ENCODE measurements at regions of chr5 and their contacts with region 1.

Region 1: GRCh38 chr5:159262859-159263567 is at the start of gene UBLCP1:
- DNase-seq: peak; percentile 86
- H3K4me3 ChIP-seq: peak within 1 kb of the TSS; percentile 80 to 92 (median 87)
- H3K27ac ChIP-seq: peak within 1 kb of the TSS; percentile 97
- H3K4me1 ChIP-seq: peaks cover 13% of the 10 kb centered on the region
- H3K27me3 ChIP-seq: no peaks in the 10 kb centered on the region
- CTCF ChIP-seq: no peak
- total RNA-seq, gene UBLCP1: 30.2 to 36.5 TPM

Region 2: DNA sequence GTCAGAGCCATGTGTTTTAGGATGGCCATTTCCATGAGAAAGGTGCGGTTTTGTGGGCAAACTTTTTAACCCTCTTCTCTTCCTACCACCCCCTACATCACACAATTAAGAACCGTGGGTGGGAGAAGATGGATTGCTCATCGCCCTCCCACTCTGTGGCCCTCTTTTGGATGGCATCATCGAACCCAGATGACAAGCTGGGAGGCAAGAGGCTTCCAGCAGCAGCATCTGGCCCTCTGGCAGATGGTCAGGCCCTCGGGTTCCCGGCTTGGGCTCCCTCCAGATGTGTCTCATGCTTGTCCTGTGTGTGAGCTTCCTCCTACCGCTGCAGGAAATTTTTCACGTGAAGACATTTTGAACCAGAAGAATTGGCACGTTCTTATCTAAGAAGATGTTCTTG is 363.2 kb before region 1 on chr5:
- CTCF ChIA-PET with region 1: no interaction called
- dilution Hi-C with region 1: no loop called
- in situ Hi-C with region 1: no loop called
- intact Hi-C with region 1: no loop called
- DNase-seq: no peak
- H3K4me3 ChIP-seq: no peak overlapping the region
- H3K27ac ChIP-seq: no peak overlapping the region
- H3K4me1 ChIP-seq: no peaks in the 10 kb centered on the region
- H3K27me3 ChIP-seq: no peaks in the 10 kb centered on the region
- CTCF ChIP-seq: no peak

Region 3: DNA sequence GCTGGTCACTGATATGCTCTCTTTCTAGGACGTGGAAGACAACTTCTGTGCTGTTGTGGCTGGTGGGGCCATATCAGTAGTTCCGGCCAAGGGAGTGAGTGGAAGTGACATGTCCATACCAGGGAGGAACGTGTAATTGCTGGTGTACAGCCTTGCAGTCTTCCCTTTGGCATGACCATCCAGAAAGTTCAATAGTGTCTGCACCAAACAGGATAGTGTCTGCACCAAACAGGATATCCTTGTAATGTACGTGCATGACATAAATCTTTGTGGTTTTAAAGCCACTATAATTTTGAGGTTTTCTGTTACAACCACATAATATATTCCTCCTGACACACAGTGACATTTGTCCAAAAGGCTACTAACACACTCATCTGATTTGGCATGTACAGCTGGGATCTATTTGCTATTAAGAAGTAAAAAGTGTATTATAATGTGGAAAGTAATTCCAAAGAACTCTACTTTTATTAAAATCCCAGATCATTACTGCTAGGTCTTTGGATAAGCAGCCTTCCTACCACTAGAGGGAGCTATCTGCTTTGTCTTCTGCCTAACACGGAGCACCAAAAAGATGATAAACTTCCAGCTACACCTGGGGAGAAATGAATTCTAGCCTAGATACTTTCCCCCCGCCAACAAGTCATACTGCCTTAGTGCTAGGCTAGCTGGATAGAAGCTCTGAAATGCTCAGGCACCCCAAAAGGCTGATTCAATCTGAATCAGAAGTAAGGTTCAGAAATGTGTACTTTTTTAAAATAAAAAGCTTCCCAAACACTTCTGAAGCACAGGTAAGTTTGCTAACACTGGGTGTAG is 106.4 kb before region 1 on chr5:
- CTCF ChIA-PET with region 1: interaction called, 4 read pairs
- dilution Hi-C with region 1: loop called (anchors 5 kb)
- in situ Hi-C with region 1: loop called in 1 of 2 experiments (anchors 25 kb)
- intact Hi-C with region 1: loop called (anchors 1 kb)
- DNase-seq: peak; percentile 65
- H3K4me3 ChIP-seq: no peak overlapping the region
- H3K27ac ChIP-seq: no peak overlapping the region
- H3K4me1 ChIP-seq: peaks cover under 1% of the 10 kb centered on the region
- H3K27me3 ChIP-seq: no peaks in the 10 kb centered on the region
- CTCF ChIP-seq: peak; percentile 84 to 87

Region 4: DNA sequence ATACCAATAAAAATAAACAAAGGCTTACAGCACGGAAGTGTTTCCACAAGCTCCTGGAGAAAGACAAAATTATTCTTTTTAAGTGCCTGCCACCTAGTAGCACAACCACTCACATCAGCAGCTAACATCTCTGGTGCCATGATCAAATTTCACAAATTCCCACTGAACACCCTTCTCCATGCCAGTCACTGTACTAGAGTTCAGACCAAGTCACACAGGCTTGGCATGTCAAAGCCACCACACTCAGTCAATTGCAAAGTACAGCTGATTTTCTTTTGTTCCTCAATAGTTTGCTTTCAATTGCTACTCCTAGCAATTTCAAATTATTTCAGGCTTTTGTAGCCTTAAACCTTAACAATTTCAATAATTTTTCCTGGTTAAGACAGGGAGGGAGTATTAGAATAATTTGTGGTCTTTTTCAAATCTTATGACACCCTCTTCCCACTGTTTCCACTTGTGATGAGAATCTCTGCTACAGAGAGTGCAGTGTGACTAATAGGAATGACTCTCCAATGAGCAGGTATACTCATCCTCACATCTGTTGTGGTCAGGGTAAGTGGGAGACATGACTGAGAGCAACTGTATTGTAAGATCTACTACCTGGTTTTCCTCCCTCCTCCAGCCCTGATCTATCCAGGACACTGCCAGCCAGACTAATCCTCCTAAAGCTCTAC is 99.8 kb before region 1 on chr5:
- CTCF ChIA-PET with region 1: no interaction called
- dilution Hi-C with region 1: loop called (anchors 5 kb)
- in situ Hi-C with region 1: loop called in 1 of 2 experiments (anchors 25 kb)
- intact Hi-C with region 1: no loop called
- DNase-seq: peak; percentile 97
- H3K4me3 ChIP-seq: no peak overlapping the region
- H3K27ac ChIP-seq: peak overlapping the region; percentile 85
- H3K4me1 ChIP-seq: peaks cover 19% of the 10 kb centered on the region
- H3K27me3 ChIP-seq: no peaks in the 10 kb centered on the region
- CTCF ChIP-seq: no peak

Region 5: DNA sequence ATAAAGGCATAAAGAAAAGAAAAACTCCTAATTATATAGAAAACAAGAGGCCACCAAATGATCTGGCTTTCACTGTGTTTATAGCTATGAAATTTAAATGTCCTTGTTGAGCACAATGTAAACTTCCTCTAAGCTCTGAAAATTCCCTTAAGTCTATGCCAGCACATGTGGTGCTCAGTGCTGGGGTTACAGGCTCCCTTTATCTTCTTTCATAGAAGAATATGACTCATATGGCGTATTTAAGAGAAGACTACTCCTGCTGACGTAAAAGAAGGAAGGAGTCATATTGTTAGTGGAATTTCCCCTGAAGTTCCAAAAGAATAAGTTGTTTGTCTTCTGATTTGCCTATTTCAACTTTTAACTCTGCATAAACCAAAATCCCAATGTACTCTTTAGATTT is 84.0 kb before region 1 on chr5:
- CTCF ChIA-PET with region 1: no interaction called
- dilution Hi-C with region 1: no loop called
- in situ Hi-C with region 1: loop called (anchors 10 to 25 kb)
- intact Hi-C with region 1: no loop called
- DNase-seq: peak; percentile 96
- H3K4me3 ChIP-seq: no peak overlapping the region
- H3K27ac ChIP-seq: peak overlapping the region; percentile 99
- H3K4me1 ChIP-seq: peaks cover 39% of the 10 kb centered on the region
- H3K27me3 ChIP-seq: no peaks in the 10 kb centered on the region
- CTCF ChIP-seq: no peak

Region 6: DNA sequence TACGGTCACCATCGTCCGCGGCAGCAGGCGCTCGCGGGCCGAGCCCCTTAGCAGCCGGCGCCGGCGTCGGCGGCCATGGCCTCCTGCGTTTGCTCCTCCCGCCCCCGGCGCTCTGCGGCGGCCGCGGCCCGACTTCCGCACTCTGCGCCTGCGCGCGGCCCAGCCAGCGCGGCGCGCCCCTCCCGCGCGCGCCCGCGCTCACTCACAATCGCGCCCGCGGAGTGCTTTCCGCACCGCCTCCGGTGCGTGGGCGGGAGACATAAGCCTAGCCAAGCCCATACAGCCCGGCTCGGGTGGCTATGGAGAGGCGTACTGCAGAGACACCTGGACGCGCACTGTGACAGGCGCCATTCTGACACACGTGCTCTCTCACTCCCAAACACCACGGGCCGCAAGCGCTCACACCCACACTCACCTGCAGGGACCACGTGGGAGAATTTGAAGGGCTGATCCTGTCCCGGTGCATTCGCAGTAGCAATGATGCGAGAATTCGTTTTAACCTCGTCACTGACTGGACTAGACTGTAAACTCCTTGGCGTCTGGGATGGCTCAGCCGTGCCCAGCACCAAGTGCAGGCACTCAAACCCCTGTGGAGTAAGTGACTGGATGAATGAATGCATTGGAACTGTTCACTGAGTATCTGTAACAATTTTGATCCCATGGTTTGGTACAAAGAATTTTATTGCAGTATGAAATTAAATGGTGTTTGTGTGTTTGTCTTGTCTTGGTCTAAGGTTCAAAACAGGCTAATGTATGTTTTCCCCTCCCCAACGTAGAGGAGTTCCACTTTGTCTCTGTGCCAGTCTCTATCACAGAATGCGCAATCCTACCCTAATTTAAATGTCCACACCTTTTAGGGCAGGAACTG is 53.3 kb before region 1 on chr5 and contains the start of gene RNF145:
- CTCF ChIA-PET with region 1: no interaction called
- dilution Hi-C with region 1: no loop called
- in situ Hi-C with region 1: loop called in 1 of 2 experiments (anchors 5 kb)
- intact Hi-C with region 1: loop called (anchors 1 kb)
- DNase-seq: peak; percentile 91
- H3K4me3 ChIP-seq: peak within 1 kb of the TSS; percentile 77 to 89 (median 79)
- H3K27ac ChIP-seq: peak within 1 kb of the TSS; percentile 90
- H3K4me1 ChIP-seq: peaks cover 20% of the 10 kb centered on the region
- H3K27me3 ChIP-seq: no peaks in the 10 kb centered on the region
- CTCF ChIP-seq: no peak
- total RNA-seq, gene RNF145: 63.2 to 78.9 TPM

Region 7: GRCh38 chr5:159220206-159220605 is 42.8 kb before region 1 on chr5:
- CTCF ChIA-PET with region 1: no interaction called
- dilution Hi-C with region 1: loop called (anchors 5 kb)
- in situ Hi-C with region 1: no loop called
- intact Hi-C with region 1: no loop called
- DNase-seq: peak; percentile 82
- H3K4me3 ChIP-seq: no peak overlapping the region
- H3K27ac ChIP-seq: peak overlapping the region; percentile 86
- H3K4me1 ChIP-seq: peaks cover 53% of the 10 kb centered on the region
- H3K27me3 ChIP-seq: no peaks in the 10 kb centered on the region
- CTCF ChIP-seq: no peak

Region 8: DNA sequence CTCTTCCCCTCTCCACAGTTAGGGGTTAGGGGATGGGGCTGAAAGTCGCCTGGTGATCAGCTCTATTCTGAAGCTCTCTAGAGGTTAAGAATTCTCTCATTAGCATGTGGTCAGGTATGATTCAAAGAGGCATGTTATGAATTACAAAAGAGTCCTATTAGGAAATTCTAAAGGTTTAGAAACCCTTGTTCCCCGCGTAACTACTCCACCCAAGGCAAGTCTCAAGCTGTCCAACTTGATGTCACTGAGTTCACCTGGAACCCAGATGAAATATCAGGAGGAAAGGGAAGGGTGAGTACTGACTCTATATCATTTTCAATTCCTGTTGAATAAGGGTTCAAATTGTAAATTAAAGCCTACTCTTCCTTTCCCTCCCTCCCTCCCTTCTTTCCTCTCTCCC is 35.6 kb before region 1 on chr5:
- CTCF ChIA-PET with region 1: interaction called, 4 read pairs
- dilution Hi-C with region 1: loop called (anchors 5 kb)
- in situ Hi-C with region 1: no loop called
- intact Hi-C with region 1: loop called (anchors 1 kb)
- DNase-seq: peak; percentile 97
- H3K4me3 ChIP-seq: no peak overlapping the region
- H3K27ac ChIP-seq: peak overlapping the region; percentile 88
- H3K4me1 ChIP-seq: peaks cover 42% of the 10 kb centered on the region
- H3K27me3 ChIP-seq: no peaks in the 10 kb centered on the region
- CTCF ChIP-seq: no peak